Right ventricle myocardium inferior (tissue), 1 donor: ENCODE measurements at regions of chr17 and their contacts with region 1.

Region 1: GRCh38 chr17:35119368-35120165 is at the start of gene RAD51D:
- DNase-seq: peak; percentile 89
- ATAC-seq: peak; percentile 97
- total RNA-seq, gene RAD51D: 4.8 TPM

Region 2: DNA sequence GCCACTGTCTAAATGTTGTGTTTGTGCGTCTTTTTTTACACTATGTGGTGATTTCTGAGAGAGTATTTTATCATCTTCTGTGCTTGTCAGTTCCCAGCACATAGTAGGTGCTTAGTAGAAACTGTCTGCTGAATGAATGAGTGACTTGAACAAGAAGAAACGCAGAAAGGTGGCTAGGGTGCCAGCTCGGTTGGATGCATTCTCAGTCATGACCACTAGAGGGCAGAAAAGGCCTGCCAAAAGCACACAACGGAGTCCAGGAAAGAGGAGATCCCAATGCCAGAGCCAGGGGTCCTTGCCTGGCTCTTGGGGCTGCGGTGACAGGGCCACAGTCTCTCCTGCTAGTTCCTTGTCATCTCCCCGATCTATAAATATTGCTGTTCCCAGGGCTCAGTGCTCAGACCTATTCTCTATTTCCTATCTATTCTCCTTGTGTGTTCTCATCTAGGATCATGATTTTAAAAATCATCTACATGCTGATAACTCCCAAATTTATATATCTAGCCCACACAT is 699.3 kb before region 1 on chr17:
- intact Hi-C with region 1: loop called (anchors 1 kb)
- DNase-seq: no peak
- ATAC-seq: no peak

Region 3: DNA sequence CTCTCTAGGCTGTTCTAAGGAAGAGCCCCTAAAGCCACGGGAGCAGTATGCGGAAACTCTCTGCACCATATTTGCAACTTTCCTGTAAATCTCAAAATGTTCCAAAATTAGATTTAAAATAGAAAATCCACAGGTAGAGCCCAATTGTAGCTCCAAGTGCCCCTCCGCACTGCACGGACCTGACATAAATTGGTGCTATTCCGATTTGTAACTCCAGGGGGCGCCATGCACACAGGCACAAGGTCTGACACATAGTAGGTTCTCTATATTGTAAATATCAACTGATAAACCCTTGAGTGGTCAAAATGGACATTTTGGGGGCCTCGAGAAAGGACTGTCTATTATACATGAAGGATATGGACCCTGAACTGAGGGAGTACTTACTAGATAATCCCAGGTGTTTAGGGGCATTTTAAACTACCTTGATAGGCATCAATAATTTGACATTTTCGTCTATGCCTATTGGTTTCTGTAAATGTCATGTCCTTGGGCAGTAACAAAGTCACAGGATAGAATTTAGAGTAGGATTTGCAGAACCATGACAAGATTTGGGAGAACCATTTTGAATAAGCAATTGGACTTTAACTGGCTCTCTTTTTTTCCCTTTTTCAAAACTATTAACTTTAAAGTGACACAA is 576.7 kb before region 1 on chr17:
- intact Hi-C with region 1: loop called (anchors 2 kb)
- DNase-seq: no peak
- ATAC-seq: no peak

Region 4: DNA sequence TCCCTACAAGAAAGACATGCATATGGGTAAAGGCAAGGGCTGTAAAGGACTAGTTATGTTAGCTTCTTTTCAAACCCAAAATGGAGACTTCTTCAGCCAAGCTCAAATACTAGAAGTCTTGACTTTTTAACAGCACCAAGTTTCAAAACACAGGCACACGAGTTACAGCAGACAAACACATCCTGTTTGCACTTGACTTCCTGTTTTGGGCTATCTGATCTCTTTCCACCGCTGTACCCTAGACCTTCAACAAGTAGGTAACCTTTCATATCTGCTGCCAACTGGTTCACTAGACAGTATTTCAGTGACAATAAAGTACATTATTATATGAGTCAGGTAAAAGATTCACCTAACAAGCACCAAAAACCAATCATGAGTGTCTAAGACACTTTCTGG is 68.4 kb before region 1 on chr17:
- intact Hi-C with region 1: no loop called
- DNase-seq: no peak
- ATAC-seq: peak; percentile 28